ENCODE measurements at regions of chrX and their contacts with region 1.

Region 1: GRCh38 chrX:109384699-109385098 is 97.2 kb downstream of the GUCY2F start:
- DNase-seq: no peak
- H3K4me3 ChIP-seq: no peak overlapping the region
- H3K27ac ChIP-seq: no peak overlapping the region
- H3K27me3 ChIP-seq: no peaks in the 10 kb centered on the region
- CTCF ChIP-seq: peak; percentile 29; the same call in 1 of the 2 replicates

Region 2: GRCh38 chrX:108699368-108699767 is 685.3 kb before region 1 on chrX:
- CTCF ChIA-PET with region 1: interaction called, 15 read pairs
- POLR2A ChIA-PET with region 1: no interaction called
- DNase-seq: no peak
- H3K4me3 ChIP-seq: no peak overlapping the region
- H3K27ac ChIP-seq: no peak overlapping the region
- H3K27me3 ChIP-seq: no peaks in the 10 kb centered on the region
- CTCF ChIP-seq: no peak; the same call in 1 of the 2 replicates